Activated T-helper 1 cell treated with anti-CD3 and anti-CD28 coated beads, Interleukin-12 subunit alpha, Interleukin-12 subunit beta, Interleukin-2, Interleukin-4 antibody, amounts not matched to agents 30 ng/mL and 10 ng/mL and 1 ng/mL, durations not matched to agents 14 hours and 24 hours and 36 hours (primary cell): ENCODE measurements at regions of chr15 and their contacts with region 1.

Region 1: DNA sequence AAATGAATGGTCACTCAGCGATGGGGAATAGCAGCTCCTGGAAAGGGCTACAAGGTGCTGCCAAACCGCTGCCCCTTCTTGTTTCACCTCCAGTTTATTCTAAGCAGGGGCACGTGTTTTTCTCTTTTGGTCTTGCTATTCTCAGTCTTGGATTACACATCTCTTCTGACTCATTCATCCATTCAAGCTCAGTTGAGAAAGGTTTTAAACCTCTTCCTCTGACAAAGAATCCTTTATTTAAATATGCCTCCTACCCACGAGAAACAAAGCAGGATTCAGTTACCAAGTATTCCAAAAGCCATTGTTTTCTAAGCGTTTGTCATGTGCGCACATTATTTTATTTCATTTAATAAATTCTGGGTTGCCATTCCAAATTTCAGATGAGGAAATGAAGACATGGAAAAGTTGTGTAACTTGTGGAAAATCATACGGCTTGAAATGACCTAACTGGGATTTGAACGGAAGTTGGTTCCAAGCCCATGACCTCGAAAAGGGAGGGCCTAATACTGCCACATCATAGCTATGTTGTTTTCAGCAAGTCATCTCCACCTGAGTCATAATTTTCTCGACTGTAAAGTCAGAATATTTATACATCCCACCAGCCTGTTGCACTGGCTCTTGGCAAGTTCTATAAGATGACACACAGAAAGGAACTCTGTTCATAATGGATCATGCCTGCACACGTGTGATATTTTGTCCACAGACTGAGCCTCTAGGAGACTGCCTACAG is 292.0 kb upstream of the SLCO3A1 start:
- DNase-seq: no peak
- H3K4me3 Mint-ChIP-seq: no peak overlapping the region
- H3K27ac Mint-ChIP-seq: no peak overlapping the region
- H3K4me1 Mint-ChIP-seq: no peaks in the 10 kb centered on the region
- H3K27me3 Mint-ChIP-seq: peaks cover 9% of the 10 kb centered on the region

Region 2: GRCh38 chr15:91535856-91536500 is 25.6 kb before region 1 on chr15:
- intact Hi-C with region 1: no loop called
- DNase-seq: no peak
- H3K4me3 Mint-ChIP-seq: no peak overlapping the region
- H3K27ac Mint-ChIP-seq: no peak overlapping the region
- H3K4me1 Mint-ChIP-seq: no peaks in the 10 kb centered on the region
- H3K27me3 Mint-ChIP-seq: no peaks in the 10 kb centered on the region

Region 3: DNA sequence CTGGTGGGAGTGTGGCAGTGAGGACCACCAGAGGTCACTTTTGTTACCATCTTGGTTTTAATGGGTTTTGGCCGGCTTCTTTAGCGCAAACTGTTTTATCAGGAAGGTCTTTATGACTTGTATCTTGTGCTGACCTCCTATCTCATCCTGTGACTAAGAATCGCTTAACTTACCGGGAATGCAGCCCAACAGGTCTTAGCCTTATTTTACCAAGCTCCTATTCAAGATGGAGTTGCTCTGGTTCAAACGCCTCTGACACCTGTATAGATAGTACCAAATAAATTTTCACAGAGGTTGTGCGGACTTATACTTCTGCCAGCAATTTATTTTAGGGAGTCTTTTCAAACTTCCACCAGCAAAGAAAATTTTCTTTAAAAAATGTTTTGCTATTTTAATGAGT is 278.3 kb after region 1 on chr15:
- intact Hi-C with region 1: loop called (anchors 10 kb)
- DNase-seq: no peak
- H3K4me3 Mint-ChIP-seq: no peak overlapping the region
- H3K27ac Mint-ChIP-seq: no peak overlapping the region
- H3K4me1 Mint-ChIP-seq: no peaks in the 10 kb centered on the region
- H3K27me3 Mint-ChIP-seq: peaks cover 21% of the 10 kb centered on the region